ENCODE measurements at regions of chr15 and their contacts with region 1.

Region 1: GRCh38 chr15:89740137-89740536 is 10.9 kb downstream of the MESP1 start:
- DNase-seq: no peak
- ATAC-seq: peak; percentile 79
- H3K4me3 ChIP-seq: no peak overlapping the region
- H3K27ac ChIP-seq: no peak overlapping the region
- H3K4me1 ChIP-seq: no peaks in the 10 kb centered on the region
- H3K27me3 ChIP-seq: no peaks in the 10 kb centered on the region

Region 2: GRCh38 chr15:89888214-89888804 is 148.2 kb after region 1 on chr15:
- intact Hi-C with region 1: loop called in 1 of 2 experiments (anchors 5 kb)
- DNase-seq: no peak
- ATAC-seq: no peak
- H3K4me3 ChIP-seq: no peak overlapping the region
- H3K27ac ChIP-seq: no peak overlapping the region
- H3K4me1 ChIP-seq: no peaks in the 10 kb centered on the region
- H3K27me3 ChIP-seq: no peaks in the 10 kb centered on the region

Measured in aorta (tissue), 5 donors.